ENCODE measurements at regions of chr6 and their contacts with region 1.

Region 1: DNA sequence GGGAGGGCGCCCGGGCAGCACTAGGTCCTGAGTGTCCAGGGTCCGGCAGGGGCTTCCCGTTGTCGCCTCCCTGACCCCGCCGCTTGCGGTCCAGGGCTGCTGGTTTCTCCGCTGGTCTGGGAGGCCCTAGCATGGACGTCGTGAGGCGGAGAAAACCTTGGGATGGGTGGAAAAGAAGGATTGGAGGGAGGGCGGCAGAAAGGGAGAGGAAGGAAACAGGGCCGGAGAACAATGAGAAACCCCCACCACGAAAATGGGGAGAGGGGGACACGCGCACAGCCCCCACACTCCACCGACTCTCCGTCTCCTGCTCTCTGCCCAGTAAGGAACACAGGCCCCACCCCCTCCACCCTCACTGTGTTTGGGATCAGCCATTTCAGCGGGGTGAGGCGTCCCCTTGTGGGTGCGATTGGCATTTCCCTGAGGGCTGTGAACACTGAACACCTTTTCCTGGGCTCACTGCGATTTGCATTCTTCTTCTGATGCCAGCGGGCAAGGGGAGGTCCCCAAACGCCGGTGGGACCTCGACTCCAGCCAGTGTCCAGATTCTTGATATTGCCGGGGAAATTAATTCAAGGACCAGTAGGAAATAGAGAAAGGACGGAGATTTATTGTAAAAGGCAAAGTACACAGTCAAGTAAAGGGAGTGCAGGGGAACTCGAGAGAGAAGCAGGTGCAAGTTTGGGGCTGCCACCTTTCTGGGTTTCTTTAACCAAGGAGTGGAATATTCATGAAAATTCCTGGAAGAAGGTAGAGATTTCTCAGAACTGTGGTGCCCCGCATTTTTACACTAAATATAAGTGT is 3.3 kb upstream of the RAET1G start:
- DNase-seq: no peak
- CTCF ChIP-seq: peak; percentile 62

Region 2: GRCh38 chr6:149903938-149904611 is 22.1 kb before region 1 on chr6:
- CTCF ChIA-PET with region 1: interaction called, 12 read pairs
- POLR2A ChIA-PET with region 1: no interaction called
- DNase-seq: no peak
- CTCF ChIP-seq: no peak

Region 3: GRCh38 chr6:149950423-149950822 is 24.2 kb after region 1 on chr6:
- CTCF ChIA-PET with region 1: no interaction called
- POLR2A ChIA-PET with region 1: no interaction called
- DNase-seq: no peak
- CTCF ChIP-seq: no peak

Measured in GM10248 (cell line).